Endothelial cell of umbilical vein (primary cell): ENCODE measurements at regions of chr17 and their contacts with region 1.

Region 1: DNA sequence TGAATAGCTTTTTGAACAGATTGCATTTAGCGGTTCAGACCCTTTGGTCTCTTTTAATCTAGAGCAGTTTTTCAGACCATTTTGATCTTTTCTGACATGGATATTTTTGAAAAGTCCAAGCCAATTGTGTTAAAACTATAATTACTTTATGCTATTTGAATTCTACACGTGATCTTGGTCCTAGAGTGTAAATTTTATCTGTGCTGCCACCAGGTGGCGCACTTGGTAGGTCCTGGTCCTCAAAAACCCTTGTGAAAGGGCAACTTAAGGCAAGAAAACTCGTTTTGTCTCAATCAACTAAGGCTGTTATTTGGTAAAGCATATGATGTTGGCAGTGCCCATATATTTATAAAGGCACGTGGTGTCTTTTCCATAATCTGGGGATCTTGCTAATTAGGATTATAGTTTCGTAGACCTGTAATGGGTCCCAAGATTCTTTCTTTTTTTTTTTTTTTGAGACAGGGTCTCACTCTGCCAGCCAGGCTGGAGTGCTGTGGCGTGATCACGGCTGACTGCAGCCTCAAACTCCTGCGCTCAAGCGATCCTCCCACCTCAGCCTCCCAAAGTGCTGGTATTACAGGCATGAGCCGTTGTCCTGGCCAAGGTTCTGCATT is 43.9 kb upstream of the TEX2 start:
- DNase-seq: peak; percentile 84
- H3K4me3 ChIP-seq: no peak overlapping the region
- H3K27ac ChIP-seq: no peak overlapping the region
- H3K4me1 ChIP-seq: peaks cover 5% of the 10 kb centered on the region
- H3K27me3 ChIP-seq: no peaks in the 10 kb centered on the region
- CTCF ChIP-seq: peak; percentile 67 to 70
- POLR2A ChIP-seq: no peak

Region 2: GRCh38 chr17:63665527-63666214 is 641.3 kb before region 1 on chr17:
- CTCF ChIA-PET with region 1: no interaction called
- POLR2A ChIA-PET with region 1: no interaction called
- dilution Hi-C with region 1: no loop called
- intact Hi-C with region 1: no loop called
- DNase-seq: peak; percentile 80
- H3K4me3 ChIP-seq: peak overlapping the region in 1 of 3 experiments; percentile 2
- H3K27ac ChIP-seq: peak overlapping the region; percentile 17
- H3K4me1 ChIP-seq: peaks cover 20% of the 10 kb centered on the region
- H3K27me3 ChIP-seq: no peaks in the 10 kb centered on the region
- CTCF ChIP-seq: no peak
- POLR2A ChIP-seq: no peak

Region 3: GRCh38 chr17:64213995-64214811 is 92.8 kb before region 1 on chr17:
- CTCF ChIA-PET with region 1: no interaction called
- POLR2A ChIA-PET with region 1: no interaction called
- dilution Hi-C with region 1: no loop called
- intact Hi-C with region 1: no loop called
- DNase-seq: peak; percentile 72
- H3K4me3 ChIP-seq: no peak overlapping the region
- H3K27ac ChIP-seq: no peak overlapping the region
- H3K4me1 ChIP-seq: peaks cover 28% of the 10 kb centered on the region
- H3K27me3 ChIP-seq: no peaks in the 10 kb centered on the region
- CTCF ChIP-seq: no peak
- POLR2A ChIP-seq: no peak

Region 4: GRCh38 chr17:64291254-64291851 is 15.6 kb before region 1 on chr17:
- CTCF ChIA-PET with region 1: interaction called, 22 read pairs
- POLR2A ChIA-PET with region 1: no interaction called
- dilution Hi-C with region 1: no loop called
- intact Hi-C with region 1: no loop called
- DNase-seq: no peak
- H3K4me3 ChIP-seq: no peak overlapping the region
- H3K27ac ChIP-seq: no peak overlapping the region
- H3K4me1 ChIP-seq: no peaks in the 10 kb centered on the region
- H3K27me3 ChIP-seq: no peaks in the 10 kb centered on the region
- CTCF ChIP-seq: peak in 1 of 2 donors; percentile 48
- POLR2A ChIP-seq: no peak

Region 5: GRCh38 chr17:64479650-64480049 is 172.7 kb after region 1 on chr17:
- CTCF ChIA-PET with region 1: no interaction called
- POLR2A ChIA-PET with region 1: no interaction called
- dilution Hi-C with region 1: loop called (anchors 10 kb)
- intact Hi-C with region 1: no loop called
- DNase-seq: no peak
- H3K4me3 ChIP-seq: no peak overlapping the region
- H3K27ac ChIP-seq: no peak overlapping the region
- H3K4me1 ChIP-seq: no peaks in the 10 kb centered on the region
- H3K27me3 ChIP-seq: no peaks in the 10 kb centered on the region
- CTCF ChIP-seq: no peak
- POLR2A ChIP-seq: no peak

Region 6: DNA sequence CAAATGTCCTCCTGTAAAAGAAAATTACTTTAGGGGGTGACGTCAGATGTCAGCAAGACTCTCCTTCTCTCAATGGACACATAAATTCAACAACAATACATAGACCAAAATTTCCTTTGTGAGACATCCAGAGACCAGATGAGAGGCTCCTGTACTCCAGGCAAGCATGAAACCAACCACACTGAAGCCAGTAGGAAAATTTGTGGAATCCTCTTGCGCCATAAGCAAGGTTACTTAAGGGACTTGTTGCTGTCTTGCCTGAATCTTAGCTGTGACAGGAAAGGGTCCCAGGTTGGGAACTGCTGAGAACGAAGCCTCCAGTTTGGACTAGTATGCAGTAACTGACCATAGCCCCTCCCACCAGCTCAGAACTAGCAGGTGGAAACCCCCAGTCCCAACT is 1828.9 kb after region 1 on chr17:
- CTCF ChIA-PET with region 1: no interaction called
- POLR2A ChIA-PET with region 1: no interaction called
- dilution Hi-C with region 1: no loop called
- intact Hi-C with region 1: no loop called
- DNase-seq: no peak
- H3K4me3 ChIP-seq: no peak overlapping the region
- H3K27ac ChIP-seq: no peak overlapping the region
- H3K4me1 ChIP-seq: no peaks in the 10 kb centered on the region
- H3K27me3 ChIP-seq: no peaks in the 10 kb centered on the region
- CTCF ChIP-seq: no peak
- POLR2A ChIP-seq: no peak